MCF 10A (cell line): ENCODE measurements at regions of chr15 and their contacts with region 1.

Region 1: GRCh38 chr15:70097337-70098169 is at the start of gene TLE3:
- DNase-seq: peak; percentile 98
- H3K4me3 Mint-ChIP-seq: peak within 1 kb of the TSS; percentile 92
- H3K27ac Mint-ChIP-seq: peak within 1 kb of the TSS; percentile 93
- H3K4me1 Mint-ChIP-seq: peaks cover 26% of the 10 kb centered on the region
- H3K27me3 Mint-ChIP-seq: no peaks in the 10 kb centered on the region
- CTCF ChIP-seq: peak; percentile 35
- total RNA-seq, gene TLE3: 21.6 and 23.2 TPM in 2 replicates

Region 2: DNA sequence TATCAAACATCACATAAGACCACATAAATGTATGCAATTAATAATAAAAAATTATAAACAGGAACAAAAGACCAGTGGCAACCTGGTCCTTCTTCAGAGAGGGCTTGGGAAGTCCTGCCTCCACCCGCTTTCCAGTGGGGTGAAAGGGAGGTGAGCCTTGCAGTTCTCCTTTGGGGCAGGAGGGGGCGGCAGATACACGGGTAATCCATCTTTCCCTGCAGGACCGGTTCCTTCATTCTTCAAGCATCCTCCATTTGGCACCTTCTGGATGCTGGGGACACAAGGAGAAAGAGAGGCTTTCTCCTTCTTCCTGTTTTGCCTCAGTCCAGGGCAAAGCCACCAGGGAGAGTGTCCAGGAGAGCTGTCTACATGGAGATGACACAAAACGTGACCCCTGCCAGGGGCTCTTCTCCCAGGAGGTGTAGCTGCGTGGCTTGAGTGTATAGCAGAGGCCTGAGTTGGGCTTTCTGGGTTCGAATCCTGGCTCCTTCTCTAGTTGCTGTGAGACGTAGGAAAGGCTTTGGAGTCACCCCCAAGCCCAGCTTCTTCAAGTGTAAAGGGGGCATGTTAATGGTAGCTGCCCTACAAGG is 621.7 kb before region 1 on chr15:
- CTCF ChIA-PET with region 1: interaction called, 4 read pairs
- POLR2A ChIA-PET with region 1: no interaction called
- intact Hi-C with region 1: loop called (anchors 2 kb)
- DNase-seq: peak; percentile 72
- H3K4me3 Mint-ChIP-seq: no peak overlapping the region
- H3K27ac Mint-ChIP-seq: no peak overlapping the region
- H3K4me1 Mint-ChIP-seq: no peaks in the 10 kb centered on the region
- H3K27me3 Mint-ChIP-seq: no peaks in the 10 kb centered on the region
- CTCF ChIP-seq: peak; percentile 96

Region 3: GRCh38 chr15:69729161-69729748 is 368.3 kb before region 1 on chr15:
- CTCF ChIA-PET with region 1: no interaction called
- POLR2A ChIA-PET with region 1: no interaction called
- intact Hi-C with region 1: loop called (anchors 1 kb)
- DNase-seq: peak; percentile 39
- H3K4me3 Mint-ChIP-seq: no peak overlapping the region
- H3K27ac Mint-ChIP-seq: no peak overlapping the region
- H3K4me1 Mint-ChIP-seq: no peaks in the 10 kb centered on the region
- H3K27me3 Mint-ChIP-seq: peaks cover 56% of the 10 kb centered on the region
- CTCF ChIP-seq: peak; percentile 75

Region 4: GRCh38 chr15:70023064-70023768 is 74.3 kb before region 1 on chr15:
- CTCF ChIA-PET with region 1: interaction called, 5 read pairs
- POLR2A ChIA-PET with region 1: interaction called, 15 read pairs
- intact Hi-C with region 1: loop called (anchors 5 kb)
- DNase-seq: peak; percentile 88
- H3K4me3 Mint-ChIP-seq: peak overlapping the region; percentile 25
- H3K27ac Mint-ChIP-seq: peak overlapping the region; percentile 57
- H3K4me1 Mint-ChIP-seq: peaks cover 23% of the 10 kb centered on the region
- H3K27me3 Mint-ChIP-seq: peaks cover 45% of the 10 kb centered on the region
- CTCF ChIP-seq: no peak

Region 5: DNA sequence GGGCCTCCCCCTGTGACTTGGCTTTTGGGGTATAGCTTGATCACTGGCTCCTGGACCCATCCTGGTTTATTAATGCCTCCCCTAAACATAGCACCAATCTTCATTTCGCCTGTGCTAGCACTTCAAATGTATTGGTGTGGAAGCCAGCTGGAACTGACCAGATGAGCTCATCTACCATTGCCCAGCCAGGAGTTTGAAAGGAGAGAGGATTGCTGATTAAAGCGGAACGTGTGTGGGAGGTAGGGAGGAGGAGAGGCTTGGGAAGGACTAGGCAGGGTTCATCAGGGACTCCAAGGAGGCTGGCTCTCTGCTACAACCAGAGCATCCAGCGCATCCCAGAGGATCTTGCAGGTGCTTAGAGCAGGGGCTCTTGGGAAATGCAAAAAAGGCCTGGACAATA is 34.6 kb after region 1 on chr15:
- CTCF ChIA-PET with region 1: no interaction called
- POLR2A ChIA-PET with region 1: no interaction called
- intact Hi-C with region 1: no loop called
- DNase-seq: no peak
- H3K4me3 Mint-ChIP-seq: no peak overlapping the region
- H3K27ac Mint-ChIP-seq: no peak overlapping the region
- H3K4me1 Mint-ChIP-seq: no peaks in the 10 kb centered on the region
- H3K27me3 Mint-ChIP-seq: peaks cover 22% of the 10 kb centered on the region
- CTCF ChIP-seq: no peak

Region 6: GRCh38 chr15:70196314-70197291 is 99.0 kb after region 1 on chr15:
- CTCF ChIA-PET with region 1: no interaction called
- POLR2A ChIA-PET with region 1: interaction called, 25 read pairs
- intact Hi-C with region 1: no loop called
- DNase-seq: peak; percentile 99
- H3K4me3 Mint-ChIP-seq: peak overlapping the region; percentile 1
- H3K27ac Mint-ChIP-seq: peak overlapping the region; percentile 78
- H3K4me1 Mint-ChIP-seq: peaks cover 39% of the 10 kb centered on the region
- H3K27me3 Mint-ChIP-seq: no peaks in the 10 kb centered on the region
- CTCF ChIP-seq: no peak

Region 7: GRCh38 chr15:70474471-70475396 is 377.2 kb after region 1 on chr15:
- CTCF ChIA-PET with region 1: interaction called, 3 read pairs
- POLR2A ChIA-PET with region 1: interaction called, 18 read pairs
- intact Hi-C with region 1: no loop called
- DNase-seq: peak; percentile 98
- H3K4me3 Mint-ChIP-seq: peak overlapping the region; percentile 58
- H3K27ac Mint-ChIP-seq: peak overlapping the region; percentile 91
- H3K4me1 Mint-ChIP-seq: peaks cover 17% of the 10 kb centered on the region
- H3K27me3 Mint-ChIP-seq: peaks cover 14% of the 10 kb centered on the region
- CTCF ChIP-seq: no peak